ENCODE measurements at regions of chr7 and their contacts with region 1.

Region 1: GRCh38 chr7:84264396-84264795 is 69.8 kb upstream of the SEMA3A start:
- DNase-seq: no peak
- ATAC-seq: no peak
- H3K4me3 Mint-ChIP-seq: no peak overlapping the region
- H3K27ac Mint-ChIP-seq: no peak overlapping the region
- H3K4me1 Mint-ChIP-seq: no peaks in the 10 kb centered on the region
- H3K27me3 Mint-ChIP-seq: no peaks in the 10 kb centered on the region
- CTCF ChIP-seq: no peak

Region 2: DNA sequence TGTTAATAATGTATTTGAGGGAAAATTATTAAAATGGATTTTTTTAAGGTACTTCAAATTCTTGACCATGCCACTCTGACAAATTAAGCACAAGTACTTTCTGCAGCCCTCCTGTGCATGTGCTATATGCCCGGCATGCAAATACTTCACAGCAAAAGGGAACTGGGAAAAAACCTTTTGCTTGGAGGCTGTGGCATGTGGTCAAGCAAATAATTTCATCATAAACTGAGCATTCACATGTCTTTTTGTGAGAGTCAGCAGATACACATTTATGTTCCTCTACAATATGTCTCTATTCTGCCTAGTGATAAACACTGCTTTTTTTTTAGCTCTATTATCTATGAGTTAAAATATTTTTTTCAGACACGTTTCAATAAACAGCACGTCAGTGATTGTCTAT is 16.1 kb before region 1 on chr7:
- CTCF ChIA-PET with region 1: no interaction called
- POLR2A ChIA-PET with region 1: no interaction called
- intact Hi-C with region 1: no loop called
- DNase-seq: no peak
- ATAC-seq: no peak
- H3K4me3 Mint-ChIP-seq: no peak overlapping the region
- H3K27ac Mint-ChIP-seq: no peak overlapping the region
- H3K4me1 Mint-ChIP-seq: no peaks in the 10 kb centered on the region
- H3K27me3 Mint-ChIP-seq: peaks cover 2% of the 10 kb centered on the region
- CTCF ChIP-seq: no peak

Region 3: DNA sequence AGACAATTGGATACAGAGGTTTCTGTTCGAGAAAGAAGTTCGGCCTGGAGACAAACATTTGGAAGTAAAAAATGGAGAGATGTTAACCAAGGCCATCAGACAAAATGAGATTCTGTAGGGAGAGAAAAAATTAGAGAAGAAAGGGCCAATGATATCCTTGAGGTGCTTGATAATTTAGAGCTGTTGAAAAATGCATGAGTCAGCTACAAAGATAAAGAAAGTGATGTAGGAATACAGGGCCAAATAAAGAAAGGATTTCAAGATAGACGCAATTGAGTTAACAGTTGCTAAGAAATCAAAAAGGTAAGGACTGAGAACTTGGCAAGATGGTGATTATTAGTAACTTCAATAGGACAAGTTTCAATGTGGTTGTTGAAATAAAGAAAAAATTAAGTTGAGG is 314.4 kb after region 1 on chr7:
- CTCF ChIA-PET with region 1: no interaction called
- POLR2A ChIA-PET with region 1: no interaction called
- intact Hi-C with region 1: no loop called
- DNase-seq: no peak
- ATAC-seq: no peak
- H3K4me3 Mint-ChIP-seq: no peak overlapping the region
- H3K27ac Mint-ChIP-seq: no peak overlapping the region
- H3K4me1 Mint-ChIP-seq: no peaks in the 10 kb centered on the region
- H3K27me3 Mint-ChIP-seq: no peaks in the 10 kb centered on the region
- CTCF ChIP-seq: no peak

Region 4: GRCh38 chr7:84904561-84904960 is 640.2 kb after region 1 on chr7:
- CTCF ChIA-PET with region 1: no interaction called
- POLR2A ChIA-PET with region 1: no interaction called
- intact Hi-C with region 1: no loop called
- DNase-seq: no peak
- ATAC-seq: no peak
- H3K4me3 Mint-ChIP-seq: no peak overlapping the region
- H3K27ac Mint-ChIP-seq: no peak overlapping the region
- H3K4me1 Mint-ChIP-seq: no peaks in the 10 kb centered on the region
- H3K27me3 Mint-ChIP-seq: no peaks in the 10 kb centered on the region
- CTCF ChIP-seq: no peak

Region 5: GRCh38 chr7:85316489-85316888 is 1052.1 kb after region 1 on chr7:
- CTCF ChIA-PET with region 1: no interaction called
- POLR2A ChIA-PET with region 1: no interaction called
- intact Hi-C with region 1: loop called (anchors 5 kb)
- DNase-seq: no peak
- ATAC-seq: no peak
- H3K4me3 Mint-ChIP-seq: no peak overlapping the region
- H3K27ac Mint-ChIP-seq: no peak overlapping the region
- H3K4me1 Mint-ChIP-seq: no peaks in the 10 kb centered on the region
- H3K27me3 Mint-ChIP-seq: no peaks in the 10 kb centered on the region
- CTCF ChIP-seq: no peak